Activated CD4-positive, alpha-beta T cell treated with anti-CD3 and anti-CD28 coated beads, Interleukin-2, amount 10 ng/mL, durations not matched to agents 24 days and 14 days (primary cell): ENCODE measurements at regions of chr4 and their contacts with region 1.

Region 1: DNA sequence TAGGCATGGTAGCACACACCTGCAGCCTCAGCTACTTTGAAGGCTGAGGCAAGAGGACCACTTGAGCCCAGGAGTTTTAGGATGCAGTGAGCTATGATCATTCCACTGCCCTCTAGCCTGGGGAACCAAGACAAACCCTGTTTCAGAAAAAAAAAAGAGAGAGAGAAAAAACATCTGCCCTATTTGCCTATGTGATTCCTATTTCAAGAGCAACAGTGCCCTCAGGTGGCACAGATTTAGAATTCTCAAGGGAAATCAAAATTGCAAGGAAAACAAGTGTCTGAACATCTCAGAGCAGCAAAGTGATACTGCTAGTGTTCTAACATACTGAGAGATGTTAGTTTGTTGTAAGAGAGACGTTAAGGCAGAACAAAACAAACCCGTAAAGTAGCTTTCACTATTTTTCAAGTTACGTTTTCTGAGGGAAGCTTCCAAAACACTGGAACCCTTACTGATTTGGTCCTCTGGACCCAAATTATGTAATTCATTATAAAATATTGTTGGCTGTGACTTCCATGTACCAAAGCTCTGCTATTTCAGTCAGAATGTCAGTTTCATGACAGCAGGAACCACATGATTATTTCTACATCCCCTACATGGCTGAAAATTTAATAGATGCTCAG is 7.9 kb downstream of the BDH2 start:
- DNase-seq: peak; percentile 87
- H3K4me3 Mint-ChIP-seq: peak overlapping the region; percentile 59
- H3K27ac Mint-ChIP-seq: peak overlapping the region; percentile 51
- H3K4me1 Mint-ChIP-seq: peaks cover 20% of the 10 kb centered on the region
- H3K27me3 Mint-ChIP-seq: no peaks in the 10 kb centered on the region

Region 2: GRCh38 chr4:102449751-102450352 is 641.9 kb before region 1 on chr4:
- intact Hi-C with region 1: loop called (anchors 5 kb)
- DNase-seq: peak; percentile 89
- H3K4me3 Mint-ChIP-seq: no peak overlapping the region
- H3K27ac Mint-ChIP-seq: no peak overlapping the region
- H3K4me1 Mint-ChIP-seq: peaks cover 42% of the 10 kb centered on the region
- H3K27me3 Mint-ChIP-seq: no peaks in the 10 kb centered on the region

Region 3: DNA sequence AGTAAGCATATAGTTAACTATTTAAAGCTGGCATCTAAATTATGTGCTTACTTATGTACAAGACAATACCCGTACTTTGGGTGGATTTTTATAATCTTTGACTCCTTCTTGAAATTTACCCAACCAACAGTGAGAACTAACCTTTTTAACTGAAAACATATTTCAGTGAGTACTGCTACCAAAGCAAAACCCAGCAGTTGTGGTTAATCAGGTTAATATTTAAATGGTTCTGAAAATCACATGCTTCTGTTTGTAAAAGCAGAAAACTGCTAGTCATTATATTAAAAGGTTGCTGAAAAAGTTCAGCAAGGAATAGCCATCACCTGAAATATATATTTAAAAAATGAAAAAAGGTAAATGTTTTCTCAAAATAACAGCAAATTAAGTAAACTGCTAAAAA is 284.4 kb before region 1 on chr4:
- intact Hi-C with region 1: no loop called
- DNase-seq: no peak
- H3K4me3 Mint-ChIP-seq: no peak overlapping the region
- H3K27ac Mint-ChIP-seq: no peak overlapping the region
- H3K4me1 Mint-ChIP-seq: peaks cover 40% of the 10 kb centered on the region
- H3K27me3 Mint-ChIP-seq: no peaks in the 10 kb centered on the region

Region 4: DNA sequence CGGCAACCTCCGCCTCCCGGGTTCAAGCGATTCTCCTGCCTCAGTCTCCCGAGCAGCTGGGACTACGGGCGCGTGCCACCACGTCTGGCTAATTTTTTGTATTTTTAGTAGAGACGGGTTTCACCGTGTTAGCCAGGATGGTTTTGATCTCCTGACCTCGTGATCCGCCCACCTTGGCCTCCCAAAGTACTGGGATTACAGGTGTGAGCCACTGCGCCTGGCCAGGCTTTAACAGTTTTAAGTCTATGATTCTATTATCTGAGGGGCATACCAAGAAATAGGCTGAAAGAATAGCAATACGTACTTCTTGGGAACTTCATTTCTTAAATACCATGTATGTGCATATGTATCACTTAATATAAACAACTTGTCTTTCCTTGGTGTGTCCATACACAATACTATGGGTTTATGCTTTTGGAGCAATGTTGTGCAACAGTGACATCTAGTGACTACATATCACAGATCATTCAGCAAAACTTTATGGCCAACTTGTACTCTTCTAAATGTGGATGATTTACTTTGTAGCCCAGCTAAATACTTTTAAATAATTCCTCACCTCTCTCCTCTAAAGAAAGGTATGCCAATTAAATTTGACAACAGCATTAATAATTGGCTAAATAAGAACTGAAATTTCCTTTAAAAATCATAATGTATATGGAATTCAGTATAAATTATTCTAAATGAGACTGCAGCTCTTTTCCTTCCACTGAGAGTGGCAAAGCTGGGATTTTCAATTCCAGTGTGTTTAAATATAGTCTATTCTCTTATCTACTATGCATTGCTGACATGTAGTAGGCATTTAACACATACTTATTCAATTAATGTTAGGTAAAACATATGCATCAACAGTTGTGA is 82.6 kb before region 1 on chr4:
- intact Hi-C with region 1: loop called (anchors 2 kb)
- DNase-seq: peak; percentile 83
- H3K4me3 Mint-ChIP-seq: no peak overlapping the region
- H3K27ac Mint-ChIP-seq: no peak overlapping the region
- H3K4me1 Mint-ChIP-seq: no peaks in the 10 kb centered on the region
- H3K27me3 Mint-ChIP-seq: peaks cover 8% of the 10 kb centered on the region

Region 5: DNA sequence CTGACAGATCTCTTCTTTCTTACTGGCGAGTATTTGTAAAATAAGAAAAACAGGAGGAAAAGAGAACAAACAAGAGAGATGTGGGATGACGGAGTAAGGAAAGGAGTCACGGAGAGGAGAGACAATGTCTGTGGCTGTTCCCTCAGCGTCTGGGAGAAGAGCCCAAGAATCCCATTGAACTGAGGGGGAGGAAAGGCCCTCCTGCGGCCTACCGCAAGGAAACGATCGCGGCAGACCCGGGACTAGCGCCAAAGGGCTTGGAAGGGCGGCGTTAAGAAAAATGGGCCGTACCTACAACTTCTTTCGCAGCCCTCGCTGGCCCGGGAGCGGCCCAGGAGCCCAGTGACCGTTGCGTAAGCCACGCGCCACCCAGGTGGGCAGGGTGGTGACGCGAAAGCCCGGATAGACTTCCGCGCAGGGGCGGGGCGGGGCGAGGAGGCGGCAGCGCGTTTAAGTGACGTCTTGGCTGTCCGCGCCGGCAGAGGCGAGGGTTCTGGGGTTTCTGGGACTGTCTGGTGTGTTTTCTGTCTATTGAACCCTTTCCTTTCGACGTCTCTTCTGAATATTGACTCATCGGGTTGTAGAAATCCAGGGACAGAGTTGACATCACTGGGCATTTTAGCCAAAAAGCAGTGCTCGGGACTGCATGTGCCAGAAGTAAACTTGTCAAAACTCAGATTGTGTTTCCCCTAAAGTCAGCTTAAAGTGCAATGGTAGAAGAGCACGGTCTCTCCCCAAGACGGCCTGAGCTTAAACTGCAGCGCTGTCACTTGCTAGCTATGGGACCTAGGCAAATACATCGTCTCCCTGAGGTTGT is 72.2 kb before region 1 on chr4 and contains the start of gene SLC9B1:
- intact Hi-C with region 1: loop called (anchors 2 kb)
- DNase-seq: peak; percentile 98
- H3K4me3 Mint-ChIP-seq: peak within 1 kb of the TSS; percentile 93
- H3K27ac Mint-ChIP-seq: peak within 1 kb of the TSS; percentile 94
- H3K4me1 Mint-ChIP-seq: peaks cover 22% of the 10 kb centered on the region
- H3K27me3 Mint-ChIP-seq: no peaks in the 10 kb centered on the region
- total RNA-seq, gene SLC9B1: 0.23 and 0.47 TPM in 2 replicates

Region 6: DNA sequence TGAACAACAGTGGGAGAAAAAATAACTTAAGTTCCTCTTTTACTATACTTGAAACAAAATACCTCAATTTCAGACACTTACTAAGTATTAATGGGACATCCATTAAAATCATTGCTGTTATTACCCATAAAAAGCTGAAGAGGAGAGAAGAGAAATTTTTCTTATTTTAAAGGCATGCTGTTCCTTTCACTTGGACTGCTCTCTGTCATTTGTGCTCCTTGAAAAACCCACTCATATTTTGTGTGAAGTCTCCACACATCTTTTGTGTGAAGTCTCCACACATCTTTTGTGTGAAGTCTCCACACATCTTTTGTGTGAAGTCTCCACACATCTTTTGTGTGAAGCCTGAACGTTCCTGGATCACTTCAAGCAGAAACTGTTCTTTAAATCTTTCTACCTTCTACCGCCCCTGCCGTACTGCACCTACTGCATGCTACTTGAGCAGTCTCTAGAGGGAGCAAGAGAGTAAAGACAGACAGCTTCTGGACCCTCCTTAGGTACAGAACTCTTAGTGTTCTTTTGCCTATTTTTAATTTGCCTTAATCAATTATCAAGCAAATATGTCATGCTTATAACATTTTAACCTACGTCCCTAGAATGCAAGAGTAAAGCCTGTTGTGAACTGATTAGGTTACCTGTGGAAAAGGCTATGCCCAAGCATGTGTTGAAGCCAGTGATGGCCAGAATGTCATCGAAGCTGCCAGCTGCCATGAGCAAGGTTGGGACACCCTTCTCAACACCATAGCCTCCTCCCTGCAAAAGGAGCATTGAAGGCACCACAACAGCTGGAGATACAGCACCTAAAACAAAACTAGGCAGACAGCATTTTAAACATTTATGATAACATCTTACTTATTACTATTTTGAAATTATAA is 45.1 kb before region 1 on chr4:
- intact Hi-C with region 1: loop called (anchors 1 kb)
- DNase-seq: peak; percentile 79
- H3K4me3 Mint-ChIP-seq: no peak overlapping the region
- H3K27ac Mint-ChIP-seq: no peak overlapping the region
- H3K4me1 Mint-ChIP-seq: peaks cover 14% of the 10 kb centered on the region
- H3K27me3 Mint-ChIP-seq: no peaks in the 10 kb centered on the region

Region 7: GRCh38 chr4:103075901-103076739 is 15.6 kb before region 1 on chr4:
- intact Hi-C with region 1: loop called (anchors 1 kb)
- DNase-seq: peak; percentile 90
- H3K4me3 Mint-ChIP-seq: peak overlapping the region; percentile 88
- H3K27ac Mint-ChIP-seq: peak overlapping the region; percentile 96
- H3K4me1 Mint-ChIP-seq: peaks cover 37% of the 10 kb centered on the region
- H3K27me3 Mint-ChIP-seq: no peaks in the 10 kb centered on the region

Region 8: GRCh38 chr4:103429283-103429682 is 337.6 kb after region 1 on chr4:
- intact Hi-C with region 1: no loop called
- DNase-seq: peak; percentile 56
- H3K4me3 Mint-ChIP-seq: no peak overlapping the region
- H3K27ac Mint-ChIP-seq: no peak overlapping the region
- H3K4me1 Mint-ChIP-seq: no peaks in the 10 kb centered on the region
- H3K27me3 Mint-ChIP-seq: no peaks in the 10 kb centered on the region